ENCODE measurements at regions of chr9 and their contacts with region 1.

Region 1: DNA sequence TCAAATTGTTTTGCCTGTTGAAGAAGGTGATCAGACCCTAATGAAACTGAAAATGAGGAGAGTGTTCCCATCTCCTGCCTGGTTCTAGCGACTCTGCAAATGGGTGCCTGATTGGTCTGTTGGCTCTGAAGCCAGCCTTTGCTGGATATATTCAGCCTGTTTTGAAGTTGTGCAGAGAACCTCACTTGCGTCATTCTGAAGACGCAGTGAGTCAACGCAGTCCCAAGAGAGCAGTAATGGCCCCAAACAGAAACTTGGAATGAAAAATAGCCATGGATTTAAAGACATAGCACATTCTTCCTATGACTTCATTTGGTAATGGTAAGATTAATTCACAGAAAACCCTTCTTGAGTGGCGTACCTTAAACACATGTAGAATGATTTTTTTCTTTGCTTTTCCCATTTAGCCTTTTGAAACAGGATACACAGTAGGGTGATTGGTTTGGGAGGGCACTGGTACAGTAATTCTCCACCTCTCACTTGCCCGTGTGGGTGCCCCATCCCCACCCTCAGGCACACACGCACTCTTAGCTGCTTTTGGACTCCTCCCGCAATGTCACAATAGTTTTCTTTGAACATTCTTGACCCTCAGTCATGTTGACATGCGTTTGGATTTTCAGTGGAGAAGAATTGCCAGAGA is 54.1 kb upstream of the ABL1 start:
- DNase-seq: peak; percentile 93
- H3K4me3 ChIP-seq: peak overlapping the region; percentile 32 to 56 (median 48)
- H3K27ac ChIP-seq: peak overlapping the region; percentile 87 to 92 (median 90)
- H3K4me1 ChIP-seq: peaks cover 42 to 77% (median 73%) of the 10 kb centered on the region in 4 donors
- H3K27me3 ChIP-seq: no peaks in the 10 kb centered on the region
- CTCF ChIP-seq: peak in 1 of 3 experiments; percentile 4
- EP300 ChIP-seq: peak; percentile 81
- POLR2A ChIP-seq: peak; percentile 69

Region 2: GRCh38 chr9:130824643-130825350 is 43.8 kb after region 1 on chr9:
- intact Hi-C with region 1: no loop called
- DNase-seq: no peak
- H3K4me3 ChIP-seq: peak overlapping the region in 3 of 4 donors; percentile 7 to 19 (median 15)
- H3K27ac ChIP-seq: peak overlapping the region; percentile 68 to 76 (median 72)
- H3K4me1 ChIP-seq: peaks cover 31 to 56% (median 43%) of the 10 kb centered on the region in 4 donors
- H3K27me3 ChIP-seq: no peaks in the 10 kb centered on the region
- CTCF ChIP-seq: no peak
- EP300 ChIP-seq: no peak
- POLR2A ChIP-seq: no peak

Region 3: DNA sequence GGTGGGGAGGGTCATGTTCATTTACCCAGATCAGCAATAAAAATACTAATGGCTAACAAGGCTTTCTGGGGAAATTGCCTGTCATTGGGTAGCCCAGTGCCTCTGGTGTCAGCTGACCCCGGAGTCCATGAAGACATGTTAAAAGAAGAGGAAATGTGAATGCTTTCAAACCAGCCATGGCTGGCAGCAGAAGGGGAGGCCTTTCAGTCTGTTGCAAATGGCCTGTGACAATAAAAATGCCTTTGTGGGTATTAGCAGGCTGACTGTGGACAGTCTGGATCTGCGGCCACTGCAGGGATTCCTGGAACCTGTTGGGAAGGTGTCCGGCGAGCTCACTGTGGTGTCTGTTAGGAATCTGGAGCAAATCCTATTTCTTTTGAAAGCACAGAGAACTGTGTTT is 61.6 kb after region 1 on chr9:
- intact Hi-C with region 1: loop called (anchors 5 kb)
- DNase-seq: no peak
- H3K4me3 ChIP-seq: peak overlapping the region in 3 of 4 donors; percentile 1 to 14 (median 12)
- H3K27ac ChIP-seq: peak overlapping the region; percentile 89 to 93 (median 92)
- H3K4me1 ChIP-seq: peaks cover 93 to 100% (median 100%) of the 10 kb centered on the region in 4 donors
- H3K27me3 ChIP-seq: no peaks in the 10 kb centered on the region
- CTCF ChIP-seq: no peak
- EP300 ChIP-seq: no peak
- POLR2A ChIP-seq: no peak

Measured in esophagus muscularis mucosa (tissue), 4 donors.